Activated CD8-positive, alpha-beta memory T cell treated with anti-CD3 and anti-CD28 coated beads, Interleukin-2, amount 10 ng/mL, durations not matched to agents 7 days and 5 days (primary cell): ENCODE measurements at regions of chr6 and their contacts with region 1.

Region 1: GRCh38 chr6:32984605-32985389 is 16.4 kb downstream of the BRD2 start:
- DNase-seq: peak; percentile 94
- ATAC-seq: peak; percentile 75
- H3K4me3 Mint-ChIP-seq: no peak overlapping the region
- H3K27ac Mint-ChIP-seq: peak overlapping the region; percentile 42
- H3K4me1 Mint-ChIP-seq: peaks cover 35% of the 10 kb centered on the region
- H3K27me3 Mint-ChIP-seq: no peaks in the 10 kb centered on the region

Region 2: GRCh38 chr6:32224696-32225095 is 760.1 kb before region 1 on chr6:
- CTCF ChIA-PET with region 1: no interaction called
- DNase-seq: no peak
- ATAC-seq: no peak
- H3K4me3 Mint-ChIP-seq: no peak overlapping the region
- H3K27ac Mint-ChIP-seq: no peak overlapping the region
- H3K4me1 Mint-ChIP-seq: no peaks in the 10 kb centered on the region
- H3K27me3 Mint-ChIP-seq: no peaks in the 10 kb centered on the region

Region 3: GRCh38 chr6:32679492-32679891 is 305.3 kb before region 1 on chr6:
- CTCF ChIA-PET with region 1: no interaction called
- DNase-seq: no peak
- ATAC-seq: no peak
- H3K4me3 Mint-ChIP-seq: no peak overlapping the region
- H3K27ac Mint-ChIP-seq: no peak overlapping the region
- H3K4me1 Mint-ChIP-seq: peaks cover 5% of the 10 kb centered on the region
- H3K27me3 Mint-ChIP-seq: peaks cover 71% of the 10 kb centered on the region

Region 4: DNA sequence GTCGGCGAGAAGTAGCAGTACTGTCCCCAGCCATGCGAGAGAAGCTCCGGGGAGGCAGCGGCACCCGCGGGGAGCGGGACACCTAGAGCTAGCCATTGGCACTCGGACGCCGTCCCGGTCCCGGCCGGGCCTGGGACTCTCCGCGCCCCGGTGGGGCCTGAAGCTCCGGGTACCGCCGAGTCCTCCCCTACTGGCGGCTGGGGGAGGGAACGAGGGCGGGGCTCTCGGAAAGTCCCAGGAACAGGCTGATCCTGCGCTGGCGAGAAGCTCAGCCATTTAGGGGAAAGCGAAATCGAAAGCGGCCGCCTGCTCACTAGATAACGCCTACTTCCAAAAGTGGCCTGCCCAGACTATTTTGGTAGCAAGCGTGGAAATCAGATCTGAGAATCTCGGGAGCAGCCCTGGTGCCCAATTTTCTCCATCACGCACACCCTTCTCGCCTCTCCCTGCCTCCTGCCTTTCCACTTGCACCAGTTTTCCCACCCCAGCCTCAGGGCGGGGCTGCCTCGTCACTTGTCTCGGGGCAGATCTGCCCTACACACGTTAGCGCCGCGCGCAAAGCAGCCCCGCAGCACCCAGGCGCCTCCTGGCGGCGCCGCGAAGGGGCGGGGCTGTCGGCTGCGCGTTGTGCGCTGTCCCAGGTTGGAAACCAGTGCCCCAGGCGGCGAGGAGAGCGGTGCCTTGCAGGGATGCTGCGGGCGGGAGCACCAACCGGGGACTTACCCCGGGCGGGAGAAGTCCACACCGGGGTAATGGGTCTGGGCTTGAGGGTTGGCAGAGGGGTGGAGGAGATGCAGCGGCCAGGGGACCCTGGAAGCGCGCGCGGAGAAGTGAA is 131.0 kb before region 1 on chr6 and contains the starts of genes PSMB9 and TAP1:
- CTCF ChIA-PET with region 1: interaction called, 11 read pairs
- DNase-seq: peak; percentile 97
- ATAC-seq: peak; percentile 84
- H3K4me3 Mint-ChIP-seq: peak within 1 kb of the TSS; percentile 99
- H3K27ac Mint-ChIP-seq: peak within 1 kb of the TSS; percentile 100
- H3K4me1 Mint-ChIP-seq: peaks cover 61% of the 10 kb centered on the region
- H3K27me3 Mint-ChIP-seq: no peaks in the 10 kb centered on the region
- total RNA-seq, gene PSMB9: 402 to 473 TPM
- total RNA-seq, gene TAP1: 407 to 417 TPM

Region 5: DNA sequence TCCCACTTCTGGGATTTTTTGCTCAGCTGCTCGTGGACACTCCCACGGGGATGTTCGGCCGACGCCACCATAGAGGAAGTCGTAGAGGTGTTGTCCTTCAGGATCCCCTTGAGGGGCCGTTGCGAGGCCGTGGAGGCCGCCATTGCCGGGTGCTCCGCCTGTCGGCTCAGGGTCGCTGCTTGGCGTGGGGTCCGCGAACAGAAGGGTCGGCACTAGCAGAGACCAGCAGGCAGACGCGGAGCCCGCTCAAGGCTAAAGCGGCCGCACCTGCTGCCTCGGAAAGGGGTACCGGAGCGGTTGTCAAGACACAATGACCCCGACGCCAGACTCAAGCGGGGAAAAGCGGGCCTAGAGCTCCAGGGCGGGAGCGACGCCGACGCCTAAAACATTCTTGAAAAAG is 105.1 kb before region 1 on chr6:
- CTCF ChIA-PET with region 1: interaction called, 122 read pairs
- DNase-seq: no peak
- ATAC-seq: no peak
- H3K4me3 Mint-ChIP-seq: no peak overlapping the region
- H3K27ac Mint-ChIP-seq: no peak overlapping the region
- H3K4me1 Mint-ChIP-seq: peaks cover 3% of the 10 kb centered on the region
- H3K27me3 Mint-ChIP-seq: peaks cover 9% of the 10 kb centered on the region

Region 6: DNA sequence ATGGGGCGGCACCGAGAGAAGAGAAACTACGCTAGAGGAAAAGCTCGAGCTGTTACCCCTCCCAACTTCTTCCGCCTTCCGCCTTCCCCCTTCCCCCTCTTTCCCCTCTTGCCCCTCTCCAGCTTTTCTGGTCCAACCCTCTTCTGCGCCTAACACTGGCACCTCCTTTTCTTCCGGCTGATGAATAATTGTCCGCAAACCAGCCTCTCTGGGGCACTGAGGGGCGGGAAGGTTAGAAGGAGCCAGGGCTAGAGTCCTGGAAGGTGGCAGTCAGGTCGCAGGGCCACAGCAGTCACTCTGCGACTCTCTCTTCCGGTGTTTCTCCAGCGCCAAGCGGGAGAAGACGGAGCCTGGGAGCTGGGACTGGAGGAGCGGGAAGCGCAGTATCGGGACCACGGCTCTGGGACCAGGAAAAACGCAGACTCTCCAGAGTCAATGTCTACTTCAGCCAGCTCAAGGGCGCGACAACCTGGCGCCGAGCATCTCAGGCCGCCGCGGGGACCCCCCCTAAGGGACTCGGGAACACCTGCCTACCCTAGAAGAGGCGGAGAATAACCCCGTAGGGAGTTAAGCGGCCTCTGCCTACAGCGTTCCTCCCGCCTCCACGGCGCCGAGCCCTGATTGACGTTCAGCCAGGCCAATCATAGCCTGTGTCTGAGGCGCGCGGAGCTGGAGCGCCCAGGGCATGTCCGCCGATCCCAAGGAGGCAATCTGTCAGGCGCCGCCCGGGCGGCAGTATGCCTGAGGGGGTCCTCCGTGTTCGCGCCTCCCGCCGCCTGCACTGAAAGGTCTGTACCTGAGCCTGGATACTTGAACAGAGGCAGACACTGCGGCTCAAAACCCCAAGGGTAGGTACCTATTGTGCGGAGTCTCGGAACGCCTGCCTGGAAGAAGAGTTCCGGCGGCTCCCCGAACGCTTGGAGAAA is 90.5 kb before region 1 on chr6:
- CTCF ChIA-PET with region 1: interaction called, 122 read pairs
- DNase-seq: peak; percentile 96
- ATAC-seq: peak; percentile 99
- H3K4me3 Mint-ChIP-seq: peak overlapping the region; percentile 99
- H3K27ac Mint-ChIP-seq: peak overlapping the region; percentile 94
- H3K4me1 Mint-ChIP-seq: peaks cover 37% of the 10 kb centered on the region
- H3K27me3 Mint-ChIP-seq: peaks cover 4% of the 10 kb centered on the region

Region 7: DNA sequence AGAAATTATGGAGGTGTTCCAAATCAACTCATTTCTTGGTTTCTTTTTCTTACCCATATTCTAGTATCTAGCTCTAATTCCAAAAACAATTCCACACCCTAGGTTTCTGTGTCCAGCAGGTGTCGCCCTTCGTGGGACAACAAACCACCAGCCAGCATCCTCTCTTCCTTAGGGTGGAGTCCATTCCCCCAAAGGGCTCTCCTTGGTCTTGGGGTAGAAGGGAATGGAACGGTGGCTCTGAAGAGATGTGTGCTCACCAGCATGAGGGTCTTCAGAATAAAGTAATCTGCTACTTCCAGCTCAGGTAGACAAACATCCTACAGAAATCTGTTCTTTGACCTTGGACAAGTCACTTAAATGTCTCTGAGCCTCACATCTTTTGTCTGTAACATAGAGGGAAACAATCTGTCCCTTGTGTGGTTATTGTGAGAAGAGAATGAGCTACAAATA is 51.1 kb before region 1 on chr6:
- CTCF ChIA-PET with region 1: interaction called, 129 read pairs
- DNase-seq: peak; percentile 83
- ATAC-seq: peak; percentile 67
- H3K4me3 Mint-ChIP-seq: no peak overlapping the region
- H3K27ac Mint-ChIP-seq: no peak overlapping the region
- H3K4me1 Mint-ChIP-seq: peaks cover 23% of the 10 kb centered on the region
- H3K27me3 Mint-ChIP-seq: no peaks in the 10 kb centered on the region

Region 8: DNA sequence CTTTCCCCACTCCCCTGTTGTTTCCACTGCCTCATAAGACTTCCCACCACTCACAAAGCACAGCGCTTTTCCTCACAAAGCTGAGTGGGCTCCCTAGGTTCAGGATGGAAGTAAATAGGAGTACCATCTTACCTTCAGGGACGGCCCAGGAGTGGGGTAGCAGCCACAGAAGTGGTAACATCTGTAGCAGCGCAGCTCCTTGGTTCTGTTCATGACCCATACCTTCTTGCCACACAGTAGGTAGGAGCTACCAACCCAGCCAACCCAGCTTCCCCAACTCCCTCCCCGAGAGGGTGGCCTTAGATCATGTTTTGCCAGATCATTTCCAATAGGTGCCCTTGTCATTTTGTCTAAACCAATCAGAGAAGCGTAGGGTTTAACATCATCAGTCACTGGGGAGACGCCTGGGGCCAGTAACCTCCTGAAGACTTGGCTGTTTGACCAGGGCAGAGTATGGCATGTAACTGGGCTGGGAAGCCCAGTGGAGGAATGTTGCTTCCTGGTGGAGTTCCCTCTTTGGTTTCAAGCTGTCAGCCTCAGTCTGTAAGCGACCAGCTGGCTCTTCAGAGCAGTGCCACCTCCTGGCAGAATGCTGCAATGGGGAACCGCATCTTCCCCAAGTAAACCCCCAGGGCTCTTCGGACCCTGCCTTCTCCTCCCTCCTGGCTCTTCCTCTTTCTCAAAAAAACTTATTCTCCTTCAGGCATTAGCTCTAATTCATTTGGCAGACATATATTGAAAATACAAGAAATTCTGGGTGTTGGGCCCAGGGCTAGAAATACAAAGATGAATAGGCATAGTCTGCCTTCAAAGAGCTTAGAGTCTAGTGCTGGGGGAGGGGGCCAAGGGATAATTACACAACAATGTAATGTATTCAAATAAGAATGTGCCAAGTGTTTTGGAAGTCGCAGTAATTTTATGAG is 31.7 kb before region 1 on chr6 and contains the start of gene HLA-DMA:
- CTCF ChIA-PET with region 1: interaction called, 124 read pairs
- DNase-seq: peak; percentile 88
- ATAC-seq: peak; percentile 98
- H3K4me3 Mint-ChIP-seq: peak within 1 kb of the TSS; percentile 79
- H3K27ac Mint-ChIP-seq: peak within 1 kb of the TSS; percentile 86
- H3K4me1 Mint-ChIP-seq: peaks cover 59% of the 10 kb centered on the region
- H3K27me3 Mint-ChIP-seq: no peaks in the 10 kb centered on the region
- total RNA-seq, gene HLA-DMA: 57.9 to 60.9 TPM

Region 9: GRCh38 chr6:32971581-32972352 is 13.0 kb before region 1 on chr6:
- CTCF ChIA-PET with region 1: interaction called, 194 read pairs
- DNase-seq: peak; percentile 100
- ATAC-seq: peak; percentile 41
- H3K4me3 Mint-ChIP-seq: peak overlapping the region; percentile 94
- H3K27ac Mint-ChIP-seq: peak overlapping the region; percentile 99
- H3K4me1 Mint-ChIP-seq: peaks cover 24% of the 10 kb centered on the region
- H3K27me3 Mint-ChIP-seq: no peaks in the 10 kb centered on the region

Region 10: GRCh38 chr6:33040157-33040556 is 55.4 kb after region 1 on chr6:
- CTCF ChIA-PET with region 1: no interaction called
- DNase-seq: no peak
- ATAC-seq: no peak
- H3K4me3 Mint-ChIP-seq: no peak overlapping the region
- H3K27ac Mint-ChIP-seq: no peak overlapping the region
- H3K4me1 Mint-ChIP-seq: no peaks in the 10 kb centered on the region
- H3K27me3 Mint-ChIP-seq: peaks cover 71% of the 10 kb centered on the region